Adrenal gland (tissue), 19 donors: ENCODE measurements at regions of chr17 and their contacts with region 1.

Region 1: DNA sequence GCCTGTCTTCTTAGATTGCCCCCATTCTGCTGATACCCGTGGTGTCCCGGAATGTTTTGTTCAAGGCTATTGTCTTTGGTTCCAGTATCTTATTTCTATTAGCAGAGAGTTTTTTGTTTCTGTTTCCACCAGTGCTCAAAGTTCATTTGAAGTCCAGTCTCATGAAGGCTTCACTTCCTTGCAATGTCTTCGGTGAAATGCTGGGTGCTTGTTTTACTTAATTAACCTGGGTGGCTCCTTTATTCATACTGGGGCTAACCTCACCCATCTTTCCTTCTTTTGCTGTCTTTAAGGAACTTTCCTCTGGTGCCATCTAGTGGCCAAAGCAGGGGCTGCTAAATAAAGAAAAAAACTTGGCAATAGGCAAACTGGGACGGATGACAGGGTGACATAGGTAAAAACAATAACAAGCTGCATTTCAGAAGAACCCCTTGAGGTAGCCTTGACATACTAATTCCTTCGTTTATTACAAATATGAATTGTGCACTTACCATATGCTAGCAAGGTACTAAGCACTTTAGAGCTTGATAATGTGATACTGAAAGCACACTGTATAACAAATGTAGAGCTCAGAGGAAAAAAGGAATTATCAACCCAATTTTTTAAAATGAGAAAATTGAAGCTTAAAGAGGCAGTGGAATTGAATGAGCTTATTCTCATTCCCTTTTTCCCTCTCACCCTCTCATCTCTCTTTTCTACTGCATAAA is 2.8 kb upstream of the SMIM36 start:
- DNase-seq: peak; percentile 43 to 90 (median 73)
- H3K4me3 ChIP-seq: no peak overlapping the region
- H3K27ac ChIP-seq: no peak overlapping the region
- H3K4me1 ChIP-seq: peaks cover 0 to 11% of the 10 kb centered on the region in 2 donors
- H3K27me3 ChIP-seq: no peaks in the 10 kb centered on the region
- CTCF ChIP-seq: peak; percentile 83 to 94 (median 85)
- POLR2A ChIP-seq: no peak

Region 2: GRCh38 chr17:54992797-54993639 is 521.0 kb before region 1 on chr17:
- intact Hi-C with region 1: loop called in 1 of 2 experiments (anchors 10 kb)
- DNase-seq: no peak
- H3K4me3 ChIP-seq: no peak overlapping the region
- H3K27ac ChIP-seq: no peak overlapping the region
- H3K4me1 ChIP-seq: no peaks in the 10 kb centered on the region
- H3K27me3 ChIP-seq: no peaks in the 10 kb centered on the region
- CTCF ChIP-seq: peak; percentile 44 to 75 (median 66)
- POLR2A ChIP-seq: no peak

Region 3: GRCh38 chr17:55356434-55357328 is 157.4 kb before region 1 on chr17:
- intact Hi-C with region 1: loop called in 1 of 2 experiments (anchors 10 kb)
- DNase-seq: peak; percentile 50 to 88 (median 79)
- H3K4me3 ChIP-seq: no peak overlapping the region
- H3K27ac ChIP-seq: no peak overlapping the region
- H3K4me1 ChIP-seq: no peaks in the 10 kb centered on the region
- H3K27me3 ChIP-seq: no peaks in the 10 kb centered on the region
- CTCF ChIP-seq: peak; percentile 68 to 81 (median 74)
- POLR2A ChIP-seq: no peak

Region 4: GRCh38 chr17:55601874-55602364 is 87.9 kb after region 1 on chr17:
- intact Hi-C with region 1: no loop called
- DNase-seq: peak in 4 of 7 donors; percentile 26 to 52 (median 44)
- H3K4me3 ChIP-seq: no peak overlapping the region
- H3K27ac ChIP-seq: no peak overlapping the region
- H3K4me1 ChIP-seq: no peaks in the 10 kb centered on the region
- H3K27me3 ChIP-seq: no peaks in the 10 kb centered on the region
- CTCF ChIP-seq: peak; percentile 56 to 86 (median 72)
- POLR2A ChIP-seq: no peak